ENCODE measurements at regions of chr4 and their contacts with region 1.

Region 1: DNA sequence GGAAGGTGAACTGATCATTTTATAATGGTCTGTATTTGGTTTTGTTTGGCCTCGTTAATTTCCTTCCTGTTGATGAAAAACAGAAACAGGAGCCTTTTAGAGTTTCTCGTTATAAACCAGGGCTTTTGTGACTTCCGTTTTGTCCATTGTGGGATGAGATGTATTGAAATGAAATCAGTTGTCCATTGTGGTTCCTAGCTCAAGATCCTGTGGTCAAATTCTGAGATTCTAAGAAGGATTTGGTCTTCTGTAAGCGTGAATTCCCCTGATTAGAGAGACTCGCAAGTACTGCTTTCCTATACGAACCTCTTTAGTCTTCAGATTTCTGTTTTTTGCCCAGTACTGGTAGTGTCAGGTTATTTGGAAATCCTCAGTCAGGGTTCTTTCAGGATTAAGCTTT is 101.7 kb downstream of the RAPGEF2 start:
- DNase-seq: no peak

Region 2: DNA sequence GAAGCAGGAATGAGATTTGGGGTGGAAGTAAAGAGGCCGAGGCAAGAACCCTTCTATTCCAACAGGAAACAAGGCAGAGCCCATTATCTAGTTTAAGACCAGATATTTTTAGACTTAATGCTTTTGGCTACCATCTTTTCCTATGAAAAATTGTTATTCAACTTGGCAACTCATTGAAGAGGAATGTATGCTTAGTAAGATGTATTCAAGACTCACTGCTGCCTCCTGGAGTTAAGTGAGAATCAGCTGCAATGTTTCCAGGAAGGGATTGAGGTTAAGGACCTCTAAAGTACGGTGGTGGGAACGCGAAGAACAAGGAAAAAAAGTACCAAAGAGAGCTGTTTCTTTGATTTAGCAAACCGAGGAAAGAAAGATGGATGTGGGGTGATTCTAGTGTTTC is 12.6 kb before region 1 on chr4:
- CTCF ChIA-PET with region 1: interaction called, 11 read pairs
- POLR2A ChIA-PET with region 1: no interaction called
- DNase-seq: peak; percentile 41

Region 3: GRCh38 chr4:159248384-159249178 is 44.0 kb after region 1 on chr4:
- CTCF ChIA-PET with region 1: no interaction called
- POLR2A ChIA-PET with region 1: no interaction called
- DNase-seq: peak; percentile 19

Measured in HEK293T (cell line).